ENCODE measurements at regions of chr10 and their contacts with region 1.

Region 1: DNA sequence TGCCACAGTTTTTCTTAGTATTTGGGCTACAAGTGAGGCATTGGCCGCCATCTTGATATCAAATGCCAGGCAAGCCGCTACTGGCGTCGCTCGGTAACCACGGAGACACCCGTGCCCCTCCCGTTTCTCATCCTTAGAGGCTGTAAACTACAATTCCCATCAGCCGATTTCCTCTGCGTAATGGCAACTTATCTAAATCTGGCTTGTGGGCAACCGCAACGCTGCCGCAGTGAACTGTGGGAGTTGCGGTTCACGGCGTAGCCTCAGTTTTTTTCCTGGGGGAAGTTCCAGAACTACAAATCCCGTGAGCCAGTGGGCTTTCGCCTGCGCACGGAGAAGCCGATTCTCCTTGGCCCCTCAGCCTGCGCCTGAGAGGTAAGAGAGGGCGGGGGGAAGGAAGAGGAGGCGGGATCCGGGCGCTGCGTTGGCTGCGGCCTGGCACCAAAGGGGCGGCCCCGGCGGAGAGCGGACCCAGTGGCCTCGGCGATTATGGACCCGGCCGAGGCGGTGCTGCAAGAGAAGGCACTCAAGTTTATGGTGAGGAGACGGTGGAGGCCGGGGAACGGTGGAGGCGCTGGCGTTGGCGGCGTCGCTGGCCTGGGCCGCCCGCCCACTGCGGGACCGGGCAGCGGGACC is at the start of gene BTRC:
- DNase-seq: peak; percentile 76 to 99 (median 98)
- ATAC-seq: peak; percentile 96
- H3K4me3 ChIP-seq: peak within 1 kb of the TSS; percentile 69
- H3K4me3 Mint-ChIP-seq: peak within 1 kb of the TSS; percentile 93 to 99 (median 98)
- H3K27ac ChIP-seq: peak within 1 kb of the TSS; percentile 94
- H3K27ac Mint-ChIP-seq: peak within 1 kb of the TSS; percentile 94 to 99 (median 98)
- H3K4me1 ChIP-seq: peaks cover 5 to 8% of the 10 kb centered on the region in 2 donors
- H3K4me1 Mint-ChIP-seq: peaks cover 15 to 41% (median 33%) of the 10 kb centered on the region in 7 donors
- H3K27me3 ChIP-seq: no peaks in the 10 kb centered on the region
- H3K27me3 Mint-ChIP-seq: peaks cover 5 to 19% (median 14%) of the 10 kb centered on the region in 5 donors
- total RNA-seq, gene BTRC: 14.7 to 26.1 (median 17.6) TPM

Region 2: GRCh38 chr10:99620713-99621453 is 1732.9 kb before region 1 on chr10:
- CTCF ChIA-PET with region 1: no interaction called
- POLR2A ChIA-PET with region 1: no interaction called
- intact Hi-C with region 1: loop called (anchors 5 to 10 kb)
- DNase-seq: peak in 7 of 9 donors; percentile 66 to 86 (median 73)
- ATAC-seq: peak; percentile 89
- H3K4me3 ChIP-seq: peak overlapping the region; percentile 85
- H3K4me3 Mint-ChIP-seq: peak overlapping the region; percentile 83 to 93 (median 88)
- H3K27ac ChIP-seq: peak overlapping the region; percentile 99
- H3K27ac Mint-ChIP-seq: peak overlapping the region; percentile 75 to 98 (median 94)
- H3K4me1 ChIP-seq: peaks cover 20 to 29% of the 10 kb centered on the region in 2 donors
- H3K4me1 Mint-ChIP-seq: peaks cover 27 to 53% (median 45%) of the 10 kb centered on the region in 7 donors
- H3K27me3 ChIP-seq: no peaks in the 10 kb centered on the region
- H3K27me3 Mint-ChIP-seq: no peaks in the 10 kb centered on the region

Region 3: DNA sequence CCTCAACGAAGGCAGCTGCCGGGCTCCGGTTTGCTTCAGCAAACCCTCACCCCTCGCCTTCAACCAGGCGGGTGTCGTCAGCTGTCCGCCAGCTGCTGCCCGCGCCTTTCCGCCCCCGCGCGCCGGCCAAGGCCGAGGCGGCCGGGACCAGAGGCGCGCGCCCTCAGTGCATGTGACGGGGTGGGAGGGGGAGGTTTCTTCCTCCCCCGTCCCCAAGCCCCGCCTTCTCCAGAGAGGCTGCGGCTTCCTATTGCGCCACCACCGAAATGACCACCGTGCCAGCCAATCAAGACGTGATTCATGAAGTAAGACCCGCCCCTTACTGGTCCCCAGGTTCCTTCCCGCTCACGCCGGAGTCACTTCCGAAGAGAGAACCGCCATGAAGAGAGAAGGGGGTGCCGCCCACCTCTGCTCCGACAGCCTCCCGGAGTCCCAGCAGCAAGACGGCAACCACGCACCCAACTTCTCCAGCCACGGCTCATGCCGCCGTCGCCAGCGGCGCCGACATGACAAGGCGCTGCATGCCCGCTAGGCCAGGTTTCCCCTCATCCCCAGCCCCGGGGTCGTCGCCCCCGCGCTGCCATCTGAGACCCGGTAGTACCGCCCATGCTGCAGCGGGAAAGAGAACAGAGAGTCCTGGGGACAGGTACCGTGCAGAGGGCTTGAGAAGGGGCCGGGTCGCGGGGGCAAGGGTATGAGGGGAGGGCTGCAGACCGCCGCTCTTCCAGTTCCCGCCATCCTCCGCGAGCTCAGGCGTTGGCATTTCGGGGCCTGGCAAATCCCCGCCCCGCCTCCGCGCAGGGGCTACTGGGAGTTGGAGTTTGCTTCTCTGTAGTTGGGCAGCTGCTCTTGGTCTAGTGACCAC is 441.0 kb before region 1 on chr10 and contains the start of gene SLF2:
- CTCF ChIA-PET with region 1: no interaction called
- POLR2A ChIA-PET with region 1: no interaction called
- intact Hi-C with region 1: loop called (anchors 1 to 2 kb)
- DNase-seq: peak; percentile 69 to 91 (median 88)
- ATAC-seq: peak; percentile 96
- H3K4me3 ChIP-seq: peak within 1 kb of the TSS; percentile 96
- H3K4me3 Mint-ChIP-seq: peak within 1 kb of the TSS; percentile 91 to 100 (median 99)
- H3K27ac ChIP-seq: peak within 1 kb of the TSS; percentile 89
- H3K27ac Mint-ChIP-seq: peak within 1 kb of the TSS; percentile 88 to 99 (median 97)
- H3K4me1 ChIP-seq: peaks cover 12 to 13% of the 10 kb centered on the region in 2 donors
- H3K4me1 Mint-ChIP-seq: peaks cover 22 to 63% (median 60%) of the 10 kb centered on the region in 7 donors
- H3K27me3 ChIP-seq: no peaks in the 10 kb centered on the region
- H3K27me3 Mint-ChIP-seq: no peaks in the 10 kb centered on the region
- total RNA-seq, gene SLF2: 20.1 to 43.7 (median 38.8) TPM

Region 4: DNA sequence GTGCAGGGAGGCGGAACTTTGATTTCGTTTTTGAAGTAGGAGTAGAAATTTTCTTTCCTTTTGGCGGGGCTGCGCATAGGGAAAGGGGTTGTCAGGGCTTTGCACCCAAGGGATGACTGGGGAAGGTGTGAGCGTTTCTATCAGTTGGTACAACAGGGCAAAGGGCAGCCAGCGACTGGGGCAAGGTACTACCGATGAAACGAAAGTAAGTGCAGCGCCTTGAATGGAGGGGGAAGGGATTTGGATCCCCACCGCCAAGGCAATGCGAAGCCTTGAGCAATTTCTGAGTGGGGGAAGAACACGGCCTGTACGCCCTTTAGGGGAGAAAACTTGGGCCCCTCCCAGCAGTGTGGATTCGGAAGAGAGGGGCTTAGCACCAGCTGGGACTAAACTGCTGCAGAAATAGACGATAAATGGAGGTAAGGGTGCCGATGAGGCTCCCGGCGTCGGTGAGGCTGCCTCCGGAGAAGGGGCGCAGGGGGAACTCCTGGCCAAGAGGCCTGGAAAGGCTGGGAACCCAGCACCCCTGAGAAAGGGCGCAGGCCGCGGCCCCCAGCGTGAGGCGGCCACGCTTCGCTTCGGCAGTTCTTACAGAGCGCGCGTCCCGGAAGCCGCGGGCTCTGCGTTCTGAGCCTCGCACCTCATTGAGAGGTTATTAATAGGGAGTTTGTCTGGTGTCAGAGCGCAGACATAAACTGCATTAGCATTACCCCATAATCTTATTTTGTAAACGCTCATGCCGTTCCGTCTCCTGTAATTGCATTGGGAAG is 232.7 kb before region 1 on chr10:
- CTCF ChIA-PET with region 1: no interaction called
- POLR2A ChIA-PET with region 1: no interaction called
- intact Hi-C with region 1: no loop called
- DNase-seq: peak in 8 of 9 donors; percentile 35 to 58 (median 47)
- ATAC-seq: peak; percentile 84
- H3K4me3 ChIP-seq: peak overlapping the region; percentile 87
- H3K4me3 Mint-ChIP-seq: peak overlapping the region; percentile 88 to 100 (median 96)
- H3K27ac ChIP-seq: peak overlapping the region; percentile 55
- H3K27ac Mint-ChIP-seq: peak overlapping the region; percentile 83 to 97 (median 90)
- H3K4me1 ChIP-seq: peaks cover 6 to 21% of the 10 kb centered on the region in 2 donors
- H3K4me1 Mint-ChIP-seq: peaks cover 21 to 32% (median 30%) of the 10 kb centered on the region in 7 donors
- H3K27me3 ChIP-seq: no peaks in the 10 kb centered on the region
- H3K27me3 Mint-ChIP-seq: peaks cover 41 to 86% (median 47%) of the 10 kb centered on the region in 5 donors

Region 5: DNA sequence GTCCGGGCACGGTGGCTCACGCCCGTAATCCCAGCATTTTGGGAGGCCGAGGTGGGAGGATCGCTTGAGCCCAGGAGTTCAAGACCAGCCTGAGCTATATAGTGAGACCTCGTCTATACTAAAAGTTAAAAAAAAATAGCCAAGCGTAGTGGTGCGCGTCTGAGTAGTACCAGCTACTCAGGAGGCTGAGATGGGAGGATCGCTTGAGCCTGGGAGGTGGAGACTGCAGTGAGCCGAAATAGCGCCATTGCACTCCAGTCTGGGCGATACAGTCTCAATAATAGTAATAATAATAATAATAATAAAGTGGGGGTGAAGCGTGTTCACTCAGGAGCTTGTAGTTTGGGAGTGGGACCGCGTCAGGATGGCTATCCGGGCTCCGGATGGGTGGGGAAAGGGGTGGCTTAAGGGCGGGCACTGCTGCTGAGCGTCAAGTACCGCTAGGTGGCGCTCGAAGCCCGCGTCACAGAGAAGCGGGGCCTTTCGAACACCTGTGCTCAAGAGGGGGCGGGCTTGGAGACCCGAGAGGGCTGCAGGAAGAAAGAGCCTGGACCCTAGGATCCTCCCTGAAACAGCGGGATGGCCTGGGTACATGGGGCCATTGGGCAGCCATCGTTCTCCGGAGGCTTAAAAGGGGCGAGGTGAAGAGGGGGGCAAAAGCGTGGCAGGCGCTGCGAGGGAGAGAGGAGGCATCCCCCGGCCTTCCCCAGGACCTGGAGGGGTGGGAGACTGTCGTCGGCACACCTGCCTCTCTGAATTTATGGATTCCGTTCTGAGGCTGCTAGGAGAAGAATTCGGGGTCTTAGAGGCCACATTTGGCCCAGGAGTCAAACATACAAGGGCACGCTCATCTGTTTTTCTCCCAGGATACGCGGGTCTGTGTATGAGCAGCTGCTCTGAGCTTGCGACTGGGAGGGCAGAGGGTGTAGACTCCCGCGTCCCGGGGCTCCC is 139.1 kb before region 1 on chr10:
- CTCF ChIA-PET with region 1: no interaction called
- POLR2A ChIA-PET with region 1: no interaction called
- intact Hi-C with region 1: loop called in 1 of 2 experiments (anchors 2 kb)
- DNase-seq: peak; percentile 42 to 77 (median 67)
- ATAC-seq: peak; percentile 86
- H3K4me3 ChIP-seq: no peak overlapping the region
- H3K4me3 Mint-ChIP-seq: peak overlapping the region; percentile 48 to 90 (median 80)
- H3K27ac ChIP-seq: no peak overlapping the region
- H3K27ac Mint-ChIP-seq: peak overlapping the region in 2 of 9 donors; percentile 25 to 86
- H3K4me1 ChIP-seq: peaks cover 27 to 41% of the 10 kb centered on the region in 2 donors
- H3K4me1 Mint-ChIP-seq: peaks cover 12 to 48% (median 33%) of the 10 kb centered on the region in 7 donors
- H3K27me3 ChIP-seq: peaks cover 16 to 39% of the 10 kb centered on the region in 2 donors
- H3K27me3 Mint-ChIP-seq: peaks cover 67 to 94% (median 81%) of the 10 kb centered on the region in 5 donors

Region 6: DNA sequence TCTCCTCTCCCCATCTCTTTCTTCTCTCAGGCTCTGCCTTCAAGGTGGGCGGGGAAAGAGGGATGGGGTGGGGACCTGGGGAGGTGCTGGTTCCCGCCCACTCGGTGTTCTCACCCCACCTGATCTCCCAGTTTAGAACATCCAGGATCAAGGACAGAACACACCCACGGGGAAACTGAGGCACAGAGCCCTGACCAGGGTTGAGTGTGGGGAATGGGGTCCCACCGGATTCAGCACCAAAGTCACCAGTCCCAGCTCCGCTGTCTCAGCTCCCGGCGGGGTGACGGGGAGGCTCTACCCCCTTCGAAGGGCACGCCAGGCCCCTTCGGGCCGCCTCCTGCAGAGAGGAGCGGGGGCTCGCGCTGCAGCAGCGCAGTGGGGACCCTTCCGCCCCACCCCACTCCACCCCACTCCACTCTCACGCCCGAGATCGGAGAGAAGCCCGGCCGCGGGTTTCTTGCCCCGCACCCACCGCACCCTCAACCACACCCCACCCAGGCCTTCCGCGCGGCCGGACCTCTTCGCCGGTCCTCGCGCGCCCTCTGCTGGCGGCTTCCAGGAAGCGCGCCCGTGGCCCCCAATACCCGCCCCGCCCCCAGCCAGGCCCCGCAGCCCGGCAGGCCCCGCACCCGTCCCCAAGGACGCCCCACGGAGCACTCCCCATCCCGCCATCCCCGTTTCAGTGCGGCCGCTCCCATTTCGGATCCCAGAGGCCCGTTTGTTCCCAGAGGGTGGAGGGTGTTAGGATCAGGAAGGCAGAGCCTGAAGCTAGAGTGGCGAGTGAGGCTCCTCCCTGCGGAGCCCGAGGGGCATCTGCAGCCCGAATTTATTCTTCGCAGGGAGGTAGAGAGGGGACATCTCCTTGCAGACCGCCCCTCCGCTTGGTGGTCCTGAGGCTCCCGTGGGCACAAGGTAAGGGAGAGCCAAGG is 216.3 kb after region 1 on chr10:
- CTCF ChIA-PET with region 1: no interaction called
- POLR2A ChIA-PET with region 1: no interaction called
- intact Hi-C with region 1: loop called in 1 of 2 experiments (anchors 5 kb)
- DNase-seq: peak; percentile 62 to 88 (median 77)
- ATAC-seq: peak; percentile 95
- H3K4me3 ChIP-seq: peak overlapping the region; percentile 69
- H3K4me3 Mint-ChIP-seq: peak overlapping the region; percentile 50 to 80 (median 74)
- H3K27ac ChIP-seq: no peak overlapping the region
- H3K27ac Mint-ChIP-seq: peak overlapping the region in 1 of 9 donors; percentile 43
- H3K4me1 ChIP-seq: peaks cover 4 to 17% of the 10 kb centered on the region in 2 donors
- H3K4me1 Mint-ChIP-seq: peaks cover 0 to 21% (median 13%) of the 10 kb centered on the region in 7 donors
- H3K27me3 ChIP-seq: peaks cover 0 to 10% of the 10 kb centered on the region in 2 donors
- H3K27me3 Mint-ChIP-seq: peaks cover 31 to 47% (median 45%) of the 10 kb centered on the region in 5 donors

Region 7: DNA sequence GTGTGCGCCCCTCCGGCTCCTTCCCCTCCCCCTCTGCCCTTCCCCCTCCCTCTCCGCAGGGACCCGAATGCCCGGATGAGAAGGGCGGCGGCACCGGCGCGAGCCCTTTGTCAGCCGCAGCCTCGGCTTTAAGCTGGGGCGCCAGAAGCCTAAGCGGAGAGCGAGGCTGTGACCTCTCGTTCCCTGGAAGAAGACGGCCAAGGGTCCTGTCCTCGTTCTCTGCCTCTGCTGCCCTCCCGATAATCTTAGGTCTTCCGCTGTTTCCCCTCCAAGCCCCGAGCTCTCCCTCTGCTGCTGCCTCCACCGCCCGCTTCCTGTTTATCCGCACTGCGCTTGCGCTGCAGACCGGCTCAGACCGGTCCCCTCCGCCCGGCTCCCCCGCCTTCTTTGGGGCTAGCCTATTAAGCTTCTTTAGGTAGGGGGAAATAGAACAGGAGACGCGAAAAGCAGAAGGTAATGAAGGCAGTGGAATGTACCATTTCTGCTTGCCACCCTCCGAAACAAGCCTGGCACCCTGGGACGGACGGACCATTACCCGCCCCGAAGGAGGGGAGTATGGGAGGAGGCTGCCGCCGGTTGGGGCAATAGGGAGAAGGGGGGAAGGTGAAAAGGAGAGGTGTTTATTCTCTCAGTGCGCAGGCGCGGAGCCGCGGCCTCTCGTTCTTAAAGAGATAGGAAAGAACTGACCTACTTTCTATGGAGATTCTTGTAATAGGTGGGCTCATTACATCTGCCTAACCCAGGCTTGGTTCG is 464.5 kb after region 1 on chr10 and contains the start of gene OGA:
- CTCF ChIA-PET with region 1: no interaction called
- POLR2A ChIA-PET with region 1: no interaction called
- intact Hi-C with region 1: loop called in 1 of 2 experiments (anchors 5 kb)
- DNase-seq: peak; percentile 90 to 100 (median 99)
- ATAC-seq: peak; percentile 97
- H3K4me3 ChIP-seq: peak within 1 kb of the TSS; percentile 81
- H3K4me3 Mint-ChIP-seq: peak within 1 kb of the TSS; percentile 95 to 100 (median 97)
- H3K27ac ChIP-seq: peak within 1 kb of the TSS; percentile 82
- H3K27ac Mint-ChIP-seq: peak within 1 kb of the TSS; percentile 95 to 99 (median 98)
- H3K4me1 ChIP-seq: peaks cover 19 to 25% of the 10 kb centered on the region in 2 donors
- H3K4me1 Mint-ChIP-seq: peaks cover 34 to 57% (median 50%) of the 10 kb centered on the region in 7 donors
- H3K27me3 ChIP-seq: no peaks in the 10 kb centered on the region
- H3K27me3 Mint-ChIP-seq: peaks cover 0 to 4% (median 0%) of the 10 kb centered on the region in 5 donors
- total RNA-seq, gene OGA: 154 to 338 (median 321) TPM

Region 8: DNA sequence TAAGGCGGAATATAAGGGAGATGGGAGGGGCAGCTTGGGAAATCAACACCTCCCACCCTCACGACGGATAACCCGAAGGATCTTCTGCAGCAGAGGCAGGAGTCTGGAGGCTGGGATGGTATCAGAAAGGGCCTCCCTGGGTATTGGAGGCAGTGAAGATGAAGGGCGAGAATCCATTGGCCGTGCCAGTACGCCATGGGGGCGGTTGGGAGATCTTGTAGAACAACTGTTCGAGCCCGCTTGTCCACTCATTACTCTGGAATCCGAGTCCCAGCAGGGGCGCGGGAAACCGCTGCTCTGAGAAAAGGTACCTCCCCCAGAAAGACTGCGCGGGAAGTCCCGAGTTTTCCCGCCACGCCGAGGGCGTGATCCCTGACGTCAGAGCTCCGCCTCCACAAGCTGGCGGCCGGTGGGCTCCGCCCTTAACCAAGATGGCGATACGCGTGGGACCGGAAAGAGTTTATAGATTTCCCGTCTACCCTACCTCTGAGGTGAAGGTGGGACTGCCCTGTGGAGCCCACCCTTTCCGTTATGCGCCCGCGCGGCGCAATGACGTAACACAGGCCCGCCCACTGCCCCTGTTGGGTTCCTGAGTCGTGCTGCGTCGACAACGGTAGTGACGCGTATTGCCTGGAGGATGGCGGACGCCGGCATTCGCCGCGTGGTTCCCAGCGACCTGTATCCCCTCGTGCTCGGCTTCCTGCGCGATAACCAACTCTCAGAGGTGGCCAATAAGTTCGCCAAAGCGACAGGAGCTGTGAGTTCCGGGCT is 798.1 kb after region 1 on chr10 and contains the start of gene NOLC1:
- CTCF ChIA-PET with region 1: no interaction called
- POLR2A ChIA-PET with region 1: no interaction called
- intact Hi-C with region 1: loop called in 1 of 2 experiments (anchors 5 kb)
- DNase-seq: peak; percentile 95 to 100 (median 100)
- ATAC-seq: peak; percentile 97
- H3K4me3 ChIP-seq: peak within 1 kb of the TSS; percentile 87
- H3K4me3 Mint-ChIP-seq: peak within 1 kb of the TSS; percentile 91 to 98 (median 96)
- H3K27ac ChIP-seq: peak within 1 kb of the TSS; percentile 94
- H3K27ac Mint-ChIP-seq: peak within 1 kb of the TSS; percentile 91 to 98 (median 96)
- H3K4me1 ChIP-seq: peaks cover 11 to 16% of the 10 kb centered on the region in 2 donors
- H3K4me1 Mint-ChIP-seq: peaks cover 28 to 58% (median 43%) of the 10 kb centered on the region in 7 donors
- H3K27me3 ChIP-seq: no peaks in the 10 kb centered on the region
- H3K27me3 Mint-ChIP-seq: peaks cover 0 to 4% (median 0%) of the 10 kb centered on the region in 5 donors
- total RNA-seq, gene NOLC1: 45.1 to 98.5 (median 58.8) TPM

Measured in naive thymus-derived CD4-positive, alpha-beta T cell (primary cell).